Activated T-helper 1 cell treated with anti-CD3 and anti-CD28 coated beads, Interleukin-12 subunit alpha, Interleukin-12 subunit beta, Interleukin-2, Interleukin-4 antibody, amounts not matched to agents 30 ng/mL and 10 ng/mL and 1 ng/mL, durations not matched to agents 14 hours and 24 hours and 36 hours (primary cell): ENCODE measurements at regions of chr3 and their contacts with region 1.

Region 1: GRCh38 chr3:4888913-4889846 is 90.1 kb upstream of the BHLHE40 start:
- DNase-seq: peak; percentile 50
- H3K4me3 Mint-ChIP-seq: peak overlapping the region; percentile 58
- H3K27ac Mint-ChIP-seq: peak overlapping the region; percentile 88
- H3K4me1 Mint-ChIP-seq: peaks cover 59% of the 10 kb centered on the region
- H3K27me3 Mint-ChIP-seq: no peaks in the 10 kb centered on the region

Region 2: GRCh38 chr3:4687167-4687566 is 202.0 kb before region 1 on chr3:
- intact Hi-C with region 1: no loop called
- DNase-seq: no peak
- H3K4me3 Mint-ChIP-seq: no peak overlapping the region
- H3K27ac Mint-ChIP-seq: no peak overlapping the region
- H3K4me1 Mint-ChIP-seq: peaks cover 6% of the 10 kb centered on the region
- H3K27me3 Mint-ChIP-seq: no peaks in the 10 kb centered on the region

Region 3: GRCh38 chr3:4712143-4712542 is 177.0 kb before region 1 on chr3:
- intact Hi-C with region 1: loop called (anchors 1 kb)
- DNase-seq: no peak
- H3K4me3 Mint-ChIP-seq: no peak overlapping the region
- H3K27ac Mint-ChIP-seq: peak overlapping the region; percentile 32
- H3K4me1 Mint-ChIP-seq: peaks cover 61% of the 10 kb centered on the region
- H3K27me3 Mint-ChIP-seq: no peaks in the 10 kb centered on the region

Region 4: GRCh38 chr3:4776980-4777581 is 112.1 kb before region 1 on chr3:
- intact Hi-C with region 1: loop called (anchors 1 kb)
- DNase-seq: peak; percentile 32
- H3K4me3 Mint-ChIP-seq: peak overlapping the region; percentile 73
- H3K27ac Mint-ChIP-seq: peak overlapping the region; percentile 98
- H3K4me1 Mint-ChIP-seq: peaks cover 82% of the 10 kb centered on the region
- H3K27me3 Mint-ChIP-seq: no peaks in the 10 kb centered on the region

Region 5: GRCh38 chr3:4821975-4822374 is 67.2 kb before region 1 on chr3:
- intact Hi-C with region 1: loop called (anchors 1 kb)
- DNase-seq: peak; percentile 82
- H3K4me3 Mint-ChIP-seq: peak overlapping the region; percentile 86
- H3K27ac Mint-ChIP-seq: peak overlapping the region; percentile 100
- H3K4me1 Mint-ChIP-seq: peaks cover 98% of the 10 kb centered on the region
- H3K27me3 Mint-ChIP-seq: no peaks in the 10 kb centered on the region

Region 6: GRCh38 chr3:4928277-4928789 is 39.2 kb after region 1 on chr3:
- intact Hi-C with region 1: loop called (anchors 2 kb)
- DNase-seq: no peak
- H3K4me3 Mint-ChIP-seq: peak overlapping the region; percentile 20
- H3K27ac Mint-ChIP-seq: peak overlapping the region; percentile 79
- H3K4me1 Mint-ChIP-seq: peaks cover 60% of the 10 kb centered on the region
- H3K27me3 Mint-ChIP-seq: no peaks in the 10 kb centered on the region

Region 7: DNA sequence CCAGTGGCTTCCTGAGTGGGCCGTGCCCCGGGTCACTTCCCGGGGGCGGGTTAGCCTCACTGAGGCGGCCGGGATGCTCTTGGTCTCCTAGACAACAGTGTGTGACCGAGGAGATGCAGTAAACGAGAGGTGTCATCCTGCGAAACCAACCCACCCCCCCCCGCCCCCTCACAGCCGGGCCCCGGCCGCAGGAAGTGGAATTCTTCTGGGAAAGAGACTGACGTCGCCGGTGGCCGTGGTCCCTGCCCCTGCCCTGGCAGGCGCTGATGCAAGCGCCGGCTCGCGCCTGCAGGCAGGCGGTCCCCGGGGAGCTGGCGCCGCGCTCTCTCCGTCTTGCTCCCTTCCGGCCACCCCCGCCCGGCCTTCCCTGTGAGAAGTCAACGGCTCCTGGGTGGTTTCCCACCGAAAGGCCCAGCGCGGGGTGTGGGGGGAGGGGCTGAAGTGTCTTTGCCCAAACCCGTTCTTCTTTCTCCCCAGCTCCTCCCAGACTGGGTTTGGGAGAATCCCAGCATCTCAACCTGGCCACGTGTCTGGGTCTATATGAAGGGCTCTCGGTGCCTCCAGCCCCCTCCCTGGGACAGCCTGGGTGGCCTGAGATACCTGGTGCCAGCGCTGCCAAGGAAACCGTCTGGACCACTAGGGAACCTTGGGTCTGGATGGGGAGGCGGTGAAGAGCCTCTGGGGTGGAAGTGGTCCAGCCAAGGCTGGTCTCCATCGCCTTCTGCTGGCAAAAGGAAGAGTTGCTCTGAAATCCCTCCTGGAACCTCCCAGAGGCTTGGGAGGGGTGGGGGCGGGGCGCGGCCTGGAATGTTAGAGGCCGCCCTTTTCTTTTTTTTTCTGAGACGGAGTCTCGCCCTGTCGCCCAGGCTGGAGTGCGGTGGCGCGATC is 137.4 kb after region 1 on chr3:
- intact Hi-C with region 1: loop called (anchors 1 kb)
- DNase-seq: peak; percentile 59
- H3K4me3 Mint-ChIP-seq: peak overlapping the region; percentile 81
- H3K27ac Mint-ChIP-seq: peak overlapping the region; percentile 95
- H3K4me1 Mint-ChIP-seq: peaks cover 70% of the 10 kb centered on the region
- H3K27me3 Mint-ChIP-seq: no peaks in the 10 kb centered on the region